Naive thymus-derived CD4-positive, alpha-beta T cell (primary cell): ENCODE measurements at regions of chr12 and their contacts with region 1.

Region 1: GRCh38 chr12:7859552-7859951 is 13.2 kb downstream of the SLC2A14 start:
- DNase-seq: no peak
- ATAC-seq: no peak
- H3K4me3 ChIP-seq: no peak overlapping the region
- H3K4me3 Mint-ChIP-seq: no peak overlapping the region
- H3K27ac ChIP-seq: no peak overlapping the region
- H3K27ac Mint-ChIP-seq: peak overlapping the region in 2 of 9 donors; percentile 4 to 26
- H3K4me1 ChIP-seq: peaks cover 0 to 4% of the 10 kb centered on the region in 2 donors
- H3K4me1 Mint-ChIP-seq: peaks cover 0 to 18% (median 8%) of the 10 kb centered on the region in 7 donors
- H3K27me3 ChIP-seq: no peaks in the 10 kb centered on the region
- H3K27me3 Mint-ChIP-seq: peaks cover 0 to 18% (median 0%) of the 10 kb centered on the region in 5 donors

Region 2: DNA sequence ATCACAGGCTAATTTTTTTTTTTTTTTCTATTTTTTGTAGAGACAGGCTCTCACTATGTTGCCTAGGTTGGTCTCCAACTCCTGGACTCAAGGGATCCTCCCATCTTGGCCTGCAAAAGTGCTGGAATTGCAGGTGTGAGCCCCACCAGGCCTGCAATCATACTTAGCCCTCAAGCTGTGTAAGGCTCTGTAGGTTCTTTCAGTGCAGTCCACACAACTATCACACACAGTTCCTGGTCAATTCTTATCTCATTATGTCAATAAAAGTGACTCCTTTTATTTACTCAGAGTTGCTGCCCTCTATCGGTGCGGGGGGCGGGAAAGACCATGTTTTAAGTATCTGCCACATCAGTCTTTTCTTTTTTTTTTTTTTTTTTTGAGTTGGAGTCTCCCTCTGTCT is 47.5 kb after region 1 on chr12:
- CTCF ChIA-PET with region 1: no interaction called
- POLR2A ChIA-PET with region 1: no interaction called
- intact Hi-C with region 1: loop called in 1 of 2 experiments (anchors 5 kb)
- DNase-seq: no peak
- ATAC-seq: no peak
- H3K4me3 ChIP-seq: no peak overlapping the region
- H3K4me3 Mint-ChIP-seq: no peak overlapping the region
- H3K27ac ChIP-seq: no peak overlapping the region
- H3K27ac Mint-ChIP-seq: peak overlapping the region in 2 of 9 donors; percentile 41 to 42
- H3K4me1 ChIP-seq: no peaks in the 10 kb centered on the region
- H3K4me1 Mint-ChIP-seq: no peaks in the 10 kb centered on the region
- H3K27me3 ChIP-seq: no peaks in the 10 kb centered on the region
- H3K27me3 Mint-ChIP-seq: no peaks in the 10 kb centered on the region

Region 3: GRCh38 chr12:7959701-7960121 is 100.2 kb after region 1 on chr12:
- CTCF ChIA-PET with region 1: no interaction called
- POLR2A ChIA-PET with region 1: no interaction called
- intact Hi-C with region 1: loop called in 1 of 2 experiments (anchors 1 kb)
- DNase-seq: peak in 8 of 9 donors; percentile 34 to 49 (median 40)
- ATAC-seq: peak; percentile 33
- H3K4me3 ChIP-seq: peak overlapping the region; percentile 79
- H3K4me3 Mint-ChIP-seq: peak overlapping the region; percentile 80 to 97 (median 89)
- H3K27ac ChIP-seq: peak overlapping the region; percentile 87
- H3K27ac Mint-ChIP-seq: peak overlapping the region; percentile 87 to 99 (median 95)
- H3K4me1 ChIP-seq: peaks cover 26 to 29% of the 10 kb centered on the region in 2 donors
- H3K4me1 Mint-ChIP-seq: peaks cover 27 to 51% (median 46%) of the 10 kb centered on the region in 7 donors
- H3K27me3 ChIP-seq: no peaks in the 10 kb centered on the region
- H3K27me3 Mint-ChIP-seq: no peaks in the 10 kb centered on the region

Region 4: DNA sequence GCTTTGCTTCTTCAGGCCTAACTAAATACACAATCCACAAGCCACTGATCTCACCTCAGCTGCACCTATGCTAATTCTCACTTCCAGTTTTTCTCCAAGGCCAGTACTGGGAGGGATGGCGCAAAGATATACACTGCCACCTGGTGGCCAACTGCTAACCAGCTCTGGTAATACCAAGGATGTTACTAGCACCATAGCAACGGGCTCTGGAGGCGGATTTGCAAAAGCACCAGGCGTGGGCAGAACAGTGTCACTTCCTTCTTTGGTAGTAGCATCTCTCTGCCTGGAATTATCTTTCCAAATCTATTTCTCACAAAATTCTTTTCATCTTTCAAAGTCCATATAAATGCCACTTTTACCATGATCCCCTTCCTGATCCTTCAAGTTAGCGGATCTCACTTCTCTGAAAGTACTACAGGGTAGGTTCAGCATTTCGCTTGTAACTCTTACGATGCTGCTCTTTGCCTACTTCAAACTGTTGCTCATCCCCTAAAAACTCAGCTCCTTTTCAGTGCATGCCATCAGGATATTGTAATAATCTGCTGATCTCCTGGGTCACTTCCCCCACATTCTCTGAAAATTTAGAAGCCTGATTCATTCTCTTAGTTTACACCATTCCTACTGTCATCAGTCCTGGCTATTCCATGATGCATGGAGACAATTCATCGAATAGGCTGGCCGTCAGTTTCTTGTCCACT is 135.9 kb after region 1 on chr12:
- CTCF ChIA-PET with region 1: interaction called, 24 read pairs
- POLR2A ChIA-PET with region 1: no interaction called
- intact Hi-C with region 1: loop called (anchors 1 kb)
- DNase-seq: peak; percentile 39 to 89 (median 84)
- ATAC-seq: peak; percentile 100
- H3K4me3 ChIP-seq: no peak overlapping the region
- H3K4me3 Mint-ChIP-seq: no peak overlapping the region
- H3K27ac ChIP-seq: peak overlapping the region; percentile 60
- H3K27ac Mint-ChIP-seq: no peak overlapping the region
- H3K4me1 ChIP-seq: peaks cover 11 to 14% of the 10 kb centered on the region in 2 donors
- H3K4me1 Mint-ChIP-seq: peaks cover 9 to 28% (median 11%) of the 10 kb centered on the region in 7 donors
- H3K27me3 ChIP-seq: no peaks in the 10 kb centered on the region
- H3K27me3 Mint-ChIP-seq: no peaks in the 10 kb centered on the region

Region 5: DNA sequence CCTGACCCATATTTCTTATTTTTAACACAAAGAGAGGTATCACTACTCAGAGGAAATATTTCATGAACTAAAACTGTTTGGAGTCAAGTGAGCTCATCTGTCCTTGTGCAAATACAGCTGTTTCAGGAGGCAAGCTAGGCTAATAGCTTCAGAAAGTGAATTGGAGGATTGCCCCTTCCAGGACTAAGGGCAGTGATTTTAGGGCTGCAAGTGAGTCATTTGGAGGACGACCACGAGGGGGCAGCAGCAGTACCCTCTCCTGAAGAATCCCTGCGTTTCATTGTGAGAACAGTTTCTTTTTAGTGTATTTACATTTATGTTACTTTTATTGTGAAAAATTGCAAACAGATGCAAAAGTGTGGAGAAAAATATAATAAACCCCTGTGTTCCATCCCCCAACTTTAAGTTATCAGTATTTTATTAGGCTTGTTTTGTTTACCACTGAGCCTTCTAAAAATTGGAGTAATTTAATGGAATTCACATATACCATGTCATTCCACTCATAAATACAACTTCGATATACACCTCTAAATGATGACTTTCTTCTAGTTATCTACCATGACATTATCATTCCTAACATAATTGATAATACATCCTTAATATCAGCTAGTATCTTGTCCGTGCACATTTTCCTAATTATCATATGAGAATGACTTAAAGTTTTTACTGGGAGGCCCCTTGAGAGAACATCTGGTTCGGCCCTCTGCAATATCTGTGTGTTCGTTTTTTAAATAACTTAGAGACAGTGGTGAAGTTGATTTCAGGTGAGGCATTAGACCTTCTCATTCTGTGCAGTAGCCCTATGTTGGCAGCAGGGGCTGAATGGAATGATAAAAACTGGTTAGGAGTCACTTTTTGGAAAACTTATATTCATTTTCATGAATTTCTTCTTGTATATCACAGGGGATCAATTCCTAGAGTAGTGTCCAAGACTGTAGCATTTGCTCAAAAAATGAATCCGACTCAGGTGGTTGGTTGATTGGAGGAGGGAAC is 186.7 kb after region 1 on chr12:
- CTCF ChIA-PET with region 1: interaction called, 3 read pairs
- POLR2A ChIA-PET with region 1: no interaction called
- intact Hi-C with region 1: loop called in 1 of 2 experiments (anchors 1 kb)
- DNase-seq: peak; percentile 60 to 85 (median 76)
- ATAC-seq: peak; percentile 96
- H3K4me3 ChIP-seq: no peak overlapping the region
- H3K4me3 Mint-ChIP-seq: no peak overlapping the region
- H3K27ac ChIP-seq: no peak overlapping the region
- H3K27ac Mint-ChIP-seq: peak overlapping the region in 5 of 9 donors; percentile 57 to 80 (median 63)
- H3K4me1 ChIP-seq: no peaks in the 10 kb centered on the region
- H3K4me1 Mint-ChIP-seq: peaks cover 10 to 19% (median 12%) of the 10 kb centered on the region in 7 donors
- H3K27me3 ChIP-seq: no peaks in the 10 kb centered on the region
- H3K27me3 Mint-ChIP-seq: no peaks in the 10 kb centered on the region